Activated CD8-positive, alpha-beta T cell treated with anti-CD3 and anti-CD28 coated beads, Interleukin-2, amount 10 ng/mL, durations not matched to agents 7 days and 5 days (primary cell): ENCODE measurements at regions of chr1 and their contacts with region 1.

Region 1: GRCh38 chr1:93878889-93879586 is at the start of gene DNTTIP2:
- DNase-seq: peak; percentile 95
- ATAC-seq: peak; percentile 92
- H3K4me3 Mint-ChIP-seq: peak within 1 kb of the TSS; percentile 93
- H3K27ac Mint-ChIP-seq: peak within 1 kb of the TSS; percentile 96
- H3K4me1 Mint-ChIP-seq: peaks cover 26% of the 10 kb centered on the region
- H3K27me3 Mint-ChIP-seq: no peaks in the 10 kb centered on the region
- total RNA-seq, gene DNTTIP2: 67.6 to 72.1 TPM

Region 2: DNA sequence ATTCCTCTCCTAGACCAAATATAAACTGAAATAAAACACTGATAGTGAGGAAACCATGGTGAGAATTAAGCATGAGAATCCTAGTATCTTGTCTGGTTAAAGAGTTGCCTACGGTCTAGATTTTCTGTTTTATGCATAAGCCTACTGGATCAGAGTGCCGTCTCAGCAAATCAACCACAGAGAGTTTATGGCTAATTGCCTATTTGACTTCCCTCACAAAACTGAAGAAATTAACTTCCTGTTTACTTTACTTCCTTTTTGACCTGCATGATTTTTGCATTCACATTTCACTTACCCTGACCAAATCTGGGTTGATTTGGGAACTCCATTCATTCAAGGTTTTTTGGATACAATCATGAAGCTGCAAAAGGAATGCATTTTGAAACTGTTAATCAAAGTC is 25.2 kb after region 1 on chr1:
- CTCF ChIA-PET with region 1: interaction called, 4 read pairs
- POLR2A ChIA-PET with region 1: interaction called, 14 read pairs
- DNase-seq: no peak
- ATAC-seq: no peak
- H3K4me3 Mint-ChIP-seq: peak overlapping the region; percentile 10
- H3K27ac Mint-ChIP-seq: peak overlapping the region; percentile 74
- H3K4me1 Mint-ChIP-seq: peaks cover 35% of the 10 kb centered on the region
- H3K27me3 Mint-ChIP-seq: no peaks in the 10 kb centered on the region

Region 3: DNA sequence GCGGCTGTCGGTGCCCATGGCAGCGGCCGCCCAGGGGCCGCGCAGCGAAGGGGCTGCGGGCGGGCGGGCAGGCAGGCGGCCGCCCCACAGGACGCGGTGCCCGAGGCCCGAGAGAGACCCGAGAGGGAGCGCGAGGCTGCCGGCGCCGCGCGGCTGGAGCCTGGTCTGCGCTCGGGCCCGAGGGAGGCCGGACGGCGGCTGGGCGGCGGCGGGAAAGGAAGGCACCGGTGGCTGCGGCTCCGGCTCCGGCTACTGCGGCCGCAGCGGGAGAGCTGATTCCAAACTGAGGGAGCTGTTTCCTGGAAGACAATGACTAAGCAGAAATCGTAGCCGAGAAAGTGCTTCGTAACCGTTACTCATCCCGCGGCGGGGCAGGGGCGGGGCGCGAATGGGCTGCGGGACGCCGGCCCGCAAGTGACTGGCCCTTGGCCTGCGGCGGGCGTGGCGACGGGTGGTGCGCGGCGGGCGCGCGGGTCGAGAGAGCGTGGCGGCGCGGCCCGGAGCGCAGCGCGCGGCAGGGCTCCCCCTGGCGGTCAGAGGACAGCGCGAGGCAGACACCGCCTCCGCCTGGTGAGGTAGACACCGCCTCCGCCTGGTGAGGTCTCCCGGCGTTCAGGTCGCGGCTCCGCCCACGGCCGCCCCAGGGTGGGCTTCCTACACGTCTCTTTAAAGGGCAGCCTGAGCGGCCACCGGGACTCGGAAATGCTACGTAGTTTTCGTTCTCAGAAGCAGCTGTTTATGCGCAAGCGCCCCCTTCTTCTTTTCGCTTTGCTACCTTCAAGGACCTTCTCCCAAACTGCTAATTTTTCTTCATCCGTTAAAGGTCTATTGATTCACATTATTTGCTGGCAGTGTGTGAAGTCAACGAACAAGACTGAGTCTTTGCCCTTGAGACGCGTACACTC is 30.4 kb after region 1 on chr1 and contains the start of gene GCLM:
- CTCF ChIA-PET with region 1: interaction called, 8 read pairs
- POLR2A ChIA-PET with region 1: interaction called, 14 read pairs
- DNase-seq: peak; percentile 91
- ATAC-seq: peak; percentile 96
- H3K4me3 Mint-ChIP-seq: peak within 1 kb of the TSS; percentile 79
- H3K27ac Mint-ChIP-seq: peak within 1 kb of the TSS; percentile 87
- H3K4me1 Mint-ChIP-seq: peaks cover 39% of the 10 kb centered on the region
- H3K27me3 Mint-ChIP-seq: peaks cover 19% of the 10 kb centered on the region
- total RNA-seq, gene GCLM: 18.8 to 21.7 TPM